CD4-positive, alpha-beta T cell (primary cell): ENCODE measurements at regions of chr17 and their contacts with region 1.

Region 1: DNA sequence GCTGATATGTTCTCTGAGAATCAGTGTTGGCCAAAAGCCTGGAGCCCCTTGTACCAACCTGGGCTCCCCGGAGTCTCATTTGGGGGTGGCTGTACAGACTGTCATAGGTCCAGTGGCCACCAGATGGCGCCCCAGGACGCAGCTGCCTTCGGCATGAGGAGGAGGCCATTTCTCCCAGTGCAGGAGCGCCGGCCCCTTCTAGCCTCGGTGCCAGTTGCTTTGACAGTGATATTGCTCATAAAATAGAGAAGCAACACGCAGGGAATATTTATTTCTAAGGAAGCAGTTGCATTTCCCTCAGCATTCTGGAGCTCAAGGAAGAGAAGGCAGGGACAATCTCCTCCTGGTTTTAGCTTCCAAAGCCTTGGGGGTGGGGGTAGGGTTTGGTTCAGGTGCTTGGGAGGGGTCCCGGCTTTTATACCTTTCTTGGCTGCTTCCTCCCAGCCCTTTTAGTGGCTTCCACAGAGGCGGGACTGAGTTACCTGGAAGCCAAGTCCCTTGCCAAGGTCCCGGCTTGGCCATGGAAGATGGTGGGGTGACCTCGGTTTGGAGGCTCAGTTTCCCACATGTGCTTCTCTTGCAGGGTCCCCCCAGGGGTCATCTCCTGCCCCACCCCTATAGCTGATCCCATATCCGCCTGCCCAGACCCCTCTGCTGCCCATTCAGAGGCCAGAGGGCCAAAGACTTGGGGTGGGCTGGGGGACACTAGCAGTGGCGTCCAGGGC is 117.8 kb upstream of the CDC42EP4 start:
- DNase-seq: peak; percentile 74 to 94 (median 87)
- ATAC-seq: peak; percentile 97
- H3K4me3 ChIP-seq: no peak overlapping the region
- H3K4me3 Mint-ChIP-seq: peak overlapping the region; percentile 35
- H3K27ac ChIP-seq: no peak overlapping the region
- H3K27ac Mint-ChIP-seq: no peak overlapping the region
- H3K4me1 ChIP-seq: peaks cover 9% of the 10 kb centered on the region
- H3K4me1 Mint-ChIP-seq: peaks cover 14% of the 10 kb centered on the region
- H3K27me3 ChIP-seq: no peaks in the 10 kb centered on the region
- H3K27me3 Mint-ChIP-seq: no peaks in the 10 kb centered on the region
- CTCF ChIP-seq: peak; percentile 89

Region 2: DNA sequence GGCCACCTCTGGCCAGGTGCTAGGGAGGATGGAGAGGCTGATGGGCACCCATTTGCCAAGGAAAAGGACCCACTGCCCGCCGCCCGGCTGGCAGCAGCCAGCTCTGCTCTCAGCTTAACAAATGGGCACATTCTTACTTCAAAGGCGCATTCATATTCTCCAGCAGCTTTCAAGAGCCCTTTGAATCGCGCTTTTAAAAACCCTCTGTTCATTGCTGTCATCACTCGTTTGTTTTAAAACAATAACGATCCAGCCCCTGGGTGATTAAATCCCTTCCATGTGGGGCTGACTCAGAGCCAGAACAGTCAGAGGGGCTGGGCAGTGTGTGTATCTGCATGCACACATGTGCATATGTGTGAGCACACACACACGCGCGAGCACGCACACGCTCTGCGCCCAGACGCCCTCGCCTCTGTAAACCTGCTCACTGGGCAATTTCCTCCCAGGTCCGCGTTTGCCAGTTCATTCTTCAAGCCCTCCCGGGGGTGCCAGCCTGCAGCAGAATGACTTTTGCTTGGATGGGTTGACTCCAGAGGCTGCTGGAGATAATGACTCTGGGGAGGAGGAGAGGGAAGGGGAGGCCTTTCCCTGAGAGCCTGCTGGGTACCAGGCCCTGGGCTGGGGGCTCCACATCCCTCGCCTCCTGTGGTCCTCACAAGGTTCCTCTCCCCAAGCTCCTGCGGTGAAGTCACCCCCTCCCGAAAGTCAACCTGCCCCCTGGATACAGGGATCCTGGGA is 81.5 kb after region 1 on chr17:
- CTCF ChIA-PET with region 1: no interaction called
- POLR2A ChIA-PET with region 1: no interaction called
- intact Hi-C with region 1: no loop called
- DNase-seq: no peak
- ATAC-seq: no peak
- H3K4me3 ChIP-seq: no peak overlapping the region
- H3K4me3 Mint-ChIP-seq: no peak overlapping the region
- H3K27ac ChIP-seq: no peak overlapping the region
- H3K27ac Mint-ChIP-seq: no peak overlapping the region
- H3K4me1 ChIP-seq: no peaks in the 10 kb centered on the region
- H3K4me1 Mint-ChIP-seq: no peaks in the 10 kb centered on the region
- H3K27me3 ChIP-seq: peaks cover 0 to 2% of the 10 kb centered on the region in 2 experiments
- H3K27me3 Mint-ChIP-seq: no peaks in the 10 kb centered on the region
- CTCF ChIP-seq: no peak

Region 3: GRCh38 chr17:73595479-73595878 is 165.9 kb after region 1 on chr17:
- CTCF ChIA-PET with region 1: no interaction called
- POLR2A ChIA-PET with region 1: interaction called, 13 read pairs
- intact Hi-C with region 1: loop called (anchors 5 kb)
- DNase-seq: peak in 8 of 14 experiments; percentile 12 to 30 (median 25)
- ATAC-seq: no peak
- H3K4me3 ChIP-seq: no peak overlapping the region
- H3K4me3 Mint-ChIP-seq: no peak overlapping the region
- H3K27ac ChIP-seq: peak overlapping the region in 1 of 2 donors; percentile 10
- H3K27ac Mint-ChIP-seq: peak overlapping the region; percentile 90
- H3K4me1 ChIP-seq: peaks cover 61% of the 10 kb centered on the region
- H3K4me1 Mint-ChIP-seq: peaks cover 67% of the 10 kb centered on the region
- H3K27me3 ChIP-seq: no peaks in the 10 kb centered on the region
- H3K27me3 Mint-ChIP-seq: no peaks in the 10 kb centered on the region
- CTCF ChIP-seq: peak; percentile 24

Region 4: DNA sequence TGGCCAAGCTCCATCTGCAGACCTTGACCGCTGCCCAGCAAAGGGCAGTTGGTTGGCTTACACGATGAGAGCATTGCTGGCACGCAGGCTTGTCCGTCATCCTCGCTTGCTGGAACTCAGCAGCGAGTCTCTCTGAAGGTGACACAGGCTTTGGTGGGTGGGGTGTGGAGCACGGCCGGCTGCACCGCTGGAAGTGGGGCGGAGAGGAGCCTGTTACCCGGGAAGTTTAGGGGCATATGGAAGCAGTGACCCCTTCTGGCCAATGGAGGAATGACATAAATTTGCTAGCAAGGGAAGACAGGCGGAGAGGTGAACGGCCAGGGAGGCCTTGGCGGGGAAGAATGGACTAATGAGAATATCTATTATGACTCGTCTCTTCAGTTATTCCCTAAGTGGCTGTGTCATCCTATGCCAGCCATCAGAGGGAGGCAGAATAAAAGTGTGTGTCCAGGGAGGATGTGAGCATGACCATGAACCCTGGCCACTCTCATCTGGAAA is 280.5 kb after region 1 on chr17:
- CTCF ChIA-PET with region 1: interaction called, 22 read pairs
- POLR2A ChIA-PET with region 1: no interaction called
- intact Hi-C with region 1: loop called (anchors 1 kb)
- DNase-seq: peak; percentile 38 to 84 (median 60)
- ATAC-seq: peak; percentile 79
- H3K4me3 ChIP-seq: no peak overlapping the region
- H3K4me3 Mint-ChIP-seq: no peak overlapping the region
- H3K27ac ChIP-seq: no peak overlapping the region
- H3K27ac Mint-ChIP-seq: peak overlapping the region; percentile 4
- H3K4me1 ChIP-seq: peaks cover 15% of the 10 kb centered on the region
- H3K4me1 Mint-ChIP-seq: peaks cover 17% of the 10 kb centered on the region
- H3K27me3 ChIP-seq: no peaks in the 10 kb centered on the region
- H3K27me3 Mint-ChIP-seq: no peaks in the 10 kb centered on the region
- CTCF ChIP-seq: peak; percentile 91

Region 5: GRCh38 chr17:73956669-73957465 is 527.3 kb after region 1 on chr17:
- CTCF ChIA-PET with region 1: interaction called, 7 read pairs
- POLR2A ChIA-PET with region 1: no interaction called
- intact Hi-C with region 1: loop called (anchors 1 kb)
- DNase-seq: peak; percentile 35 to 71 (median 54)
- ATAC-seq: peak; percentile 66
- H3K4me3 ChIP-seq: no peak overlapping the region
- H3K4me3 Mint-ChIP-seq: no peak overlapping the region
- H3K27ac ChIP-seq: no peak overlapping the region
- H3K27ac Mint-ChIP-seq: no peak overlapping the region
- H3K4me1 ChIP-seq: peaks cover 13% of the 10 kb centered on the region
- H3K4me1 Mint-ChIP-seq: peaks cover 3% of the 10 kb centered on the region
- H3K27me3 ChIP-seq: peaks cover 13 to 14% of the 10 kb centered on the region in 2 experiments
- H3K27me3 Mint-ChIP-seq: peaks cover 4% of the 10 kb centered on the region
- CTCF ChIP-seq: peak; percentile 63

Region 6: GRCh38 chr17:74176546-74177001 is 747.0 kb after region 1 on chr17:
- CTCF ChIA-PET with region 1: no interaction called
- POLR2A ChIA-PET with region 1: no interaction called
- intact Hi-C with region 1: loop called (anchors 1 kb)
- DNase-seq: peak in 10 of 14 experiments; percentile 8 to 54 (median 32)
- ATAC-seq: peak; percentile 70
- H3K4me3 ChIP-seq: no peak overlapping the region
- H3K4me3 Mint-ChIP-seq: no peak overlapping the region
- H3K27ac ChIP-seq: no peak overlapping the region
- H3K27ac Mint-ChIP-seq: no peak overlapping the region
- H3K4me1 ChIP-seq: no peaks in the 10 kb centered on the region
- H3K4me1 Mint-ChIP-seq: no peaks in the 10 kb centered on the region
- H3K27me3 ChIP-seq: peaks cover 8 to 20% of the 10 kb centered on the region in 2 experiments
- H3K27me3 Mint-ChIP-seq: peaks cover 55% of the 10 kb centered on the region
- CTCF ChIP-seq: peak; percentile 52